H1 (cell line): ENCODE measurements at regions of chr2 and their contacts with region 1.

Region 1: GRCh38 chr2:60641811-60642788 is 88.6 kb upstream of the BCL11A start:
- DNase-seq: peak in 1 of 2 experiments; percentile 47
- H3K4me3 ChIP-seq: no peak overlapping the region
- H3K27ac ChIP-seq: no peak overlapping the region
- H3K4me1 ChIP-seq: no peaks in the 10 kb centered on the region
- H3K27me3 ChIP-seq: no peaks in the 10 kb centered on the region; a peak in 1 of 7 replicates
- CTCF ChIP-seq: peak; percentile 27 to 57 (median 57)
- EP300 ChIP-seq: no peak
- POLR2A ChIP-seq: no peak
- RAD21 ChIP-seq: peak; percentile 28 to 40; a peak in 3 of 4 replicates

Region 2: DNA sequence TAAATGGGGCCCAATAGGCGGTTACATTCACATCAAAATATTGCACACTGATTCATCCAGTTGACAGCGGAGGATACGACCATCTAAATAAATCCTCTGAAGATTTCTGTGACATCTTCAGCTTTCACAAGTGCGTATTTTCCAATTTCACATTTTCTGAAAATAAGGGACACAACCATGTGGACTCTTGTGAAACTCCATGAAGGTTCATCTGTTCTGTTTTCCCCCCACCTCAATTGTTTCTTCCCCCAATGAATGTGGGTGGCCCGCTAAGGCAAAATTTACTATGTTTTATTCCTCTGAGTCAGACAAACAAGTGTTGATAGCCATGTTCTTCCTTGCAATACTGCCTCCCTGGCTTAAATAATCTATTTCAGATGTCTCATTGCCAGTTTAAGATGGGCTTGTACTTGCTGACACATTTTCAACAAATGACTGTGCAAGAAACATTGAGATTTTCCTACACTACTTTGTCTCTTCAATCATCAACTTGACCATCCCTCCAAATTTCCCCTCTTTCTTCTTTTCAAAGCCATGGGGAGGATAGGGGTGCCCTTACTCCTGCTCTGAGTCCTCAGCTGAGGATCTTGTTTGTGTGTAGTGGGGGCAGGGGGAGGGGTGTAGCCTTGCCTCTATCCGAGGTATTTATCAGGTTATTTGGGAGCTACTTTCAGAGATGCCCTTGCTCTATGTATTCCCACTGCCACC is 166.8 kb before region 1 on chr2:
- CTCF ChIA-PET with region 1: no interaction called
- POLR2A ChIA-PET with region 1: no interaction called
- DNase-seq: no peak
- H3K4me3 ChIP-seq: peak overlapping the region in 1 of 4 experiments; percentile 30; a peak in 1 of 8 replicates
- H3K27ac ChIP-seq: no peak overlapping the region
- H3K4me1 ChIP-seq: peaks cover 22 to 58% (median 53%) of the 10 kb centered on the region in 4 experiments
- H3K27me3 ChIP-seq: peaks cover 0 to 2% (median under 1%) of the 10 kb centered on the region in 4 experiments; a peak in 4 of 7 replicates
- CTCF ChIP-seq: no peak
- EP300 ChIP-seq: no peak
- POLR2A ChIP-seq: no peak
- RAD21 ChIP-seq: no peak

Region 3: GRCh38 chr2:60652832-60653340 is 10.8 kb after region 1 on chr2:
- CTCF ChIA-PET with region 1: interaction called, 14 read pairs
- POLR2A ChIA-PET with region 1: no interaction called
- DNase-seq: no peak
- H3K4me3 ChIP-seq: no peak overlapping the region
- H3K27ac ChIP-seq: no peak overlapping the region
- H3K4me1 ChIP-seq: no peaks in the 10 kb centered on the region
- H3K27me3 ChIP-seq: peaks cover 0 to 2% (median 0%) of the 10 kb centered on the region in 4 experiments; a peak in 1 of 7 replicates
- CTCF ChIP-seq: no peak
- EP300 ChIP-seq: no peak
- POLR2A ChIP-seq: no peak
- RAD21 ChIP-seq: no peak

Region 4: DNA sequence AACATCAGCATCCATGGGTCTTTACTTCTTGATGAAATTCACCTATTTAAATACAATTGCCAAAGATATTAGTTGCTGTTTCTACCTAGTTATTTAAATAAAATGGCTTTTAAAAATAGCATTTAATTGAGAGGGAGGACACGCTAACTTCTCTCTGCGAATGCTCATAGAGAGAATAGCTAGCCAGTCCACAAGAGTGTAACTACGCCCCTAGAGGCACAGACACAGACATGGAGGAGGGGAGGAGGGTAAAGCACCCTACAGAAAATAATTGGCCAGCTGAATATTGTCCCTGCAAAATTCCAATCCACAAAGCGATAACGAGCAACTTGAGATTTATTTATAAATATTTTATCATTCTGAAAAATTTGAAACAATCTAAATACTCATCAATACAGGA is 16.9 kb after region 1 on chr2:
- CTCF ChIA-PET with region 1: interaction called, 14 read pairs
- POLR2A ChIA-PET with region 1: no interaction called
- DNase-seq: no peak
- H3K4me3 ChIP-seq: no peak overlapping the region
- H3K27ac ChIP-seq: no peak overlapping the region
- H3K4me1 ChIP-seq: no peaks in the 10 kb centered on the region
- H3K27me3 ChIP-seq: peaks cover 0 to 2% (median 0%) of the 10 kb centered on the region in 4 experiments; a peak in 1 of 7 replicates
- CTCF ChIP-seq: peak in 2 of 3 experiments; percentile 31 to 37; a peak in 3 of 4 replicates
- EP300 ChIP-seq: no peak
- POLR2A ChIP-seq: no peak
- RAD21 ChIP-seq: peak in 1 of 2 experiments; percentile 10; a peak in 1 of 4 replicates